ENCODE measurements at regions of chr6 and their contacts with region 1.

Region 1: DNA sequence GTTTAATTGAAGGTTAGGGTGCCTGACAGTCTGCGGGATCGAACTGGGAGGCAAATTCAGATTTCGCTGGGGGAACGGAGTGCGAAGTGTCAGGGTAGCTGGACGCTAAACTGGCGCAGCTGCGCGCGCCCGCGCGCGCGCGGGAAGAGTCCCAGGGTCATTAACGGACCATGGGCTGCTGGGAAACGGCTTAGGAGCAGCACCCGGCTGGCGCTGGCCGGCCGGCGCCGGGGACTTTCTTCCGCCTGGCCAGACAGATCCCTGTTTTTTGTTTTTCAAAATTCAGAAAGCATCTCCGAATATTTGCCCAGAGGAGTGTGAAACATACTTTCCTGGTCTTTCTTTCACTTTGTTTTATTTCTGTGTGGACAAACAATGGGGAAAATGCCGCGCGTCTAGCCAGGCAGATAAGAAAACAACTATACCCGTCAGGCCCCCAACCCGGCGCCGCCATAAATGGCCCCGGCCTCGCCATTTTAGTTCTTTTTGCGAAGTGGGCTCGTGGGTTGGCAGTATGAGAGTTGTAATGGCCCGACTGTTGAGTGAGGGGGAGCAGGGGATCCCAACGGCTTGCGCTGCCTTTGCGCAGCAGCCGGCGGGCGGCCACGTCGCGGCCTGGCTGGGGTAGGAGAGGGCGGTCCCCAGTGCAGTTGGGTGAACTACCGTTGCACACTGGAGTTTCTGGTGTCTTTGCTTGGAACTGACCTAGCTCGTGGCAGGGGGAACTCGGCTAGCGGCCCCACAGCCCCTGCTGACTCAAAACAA is 7.1 kb downstream of the HSPA1B start:
- DNase-seq: peak; percentile 71
- H3K4me3 Mint-ChIP-seq: peak overlapping the region; percentile 87
- H3K27ac Mint-ChIP-seq: peak overlapping the region; percentile 97
- H3K4me1 Mint-ChIP-seq: peaks cover 36% of the 10 kb centered on the region
- H3K27me3 Mint-ChIP-seq: no peaks in the 10 kb centered on the region

Region 2: DNA sequence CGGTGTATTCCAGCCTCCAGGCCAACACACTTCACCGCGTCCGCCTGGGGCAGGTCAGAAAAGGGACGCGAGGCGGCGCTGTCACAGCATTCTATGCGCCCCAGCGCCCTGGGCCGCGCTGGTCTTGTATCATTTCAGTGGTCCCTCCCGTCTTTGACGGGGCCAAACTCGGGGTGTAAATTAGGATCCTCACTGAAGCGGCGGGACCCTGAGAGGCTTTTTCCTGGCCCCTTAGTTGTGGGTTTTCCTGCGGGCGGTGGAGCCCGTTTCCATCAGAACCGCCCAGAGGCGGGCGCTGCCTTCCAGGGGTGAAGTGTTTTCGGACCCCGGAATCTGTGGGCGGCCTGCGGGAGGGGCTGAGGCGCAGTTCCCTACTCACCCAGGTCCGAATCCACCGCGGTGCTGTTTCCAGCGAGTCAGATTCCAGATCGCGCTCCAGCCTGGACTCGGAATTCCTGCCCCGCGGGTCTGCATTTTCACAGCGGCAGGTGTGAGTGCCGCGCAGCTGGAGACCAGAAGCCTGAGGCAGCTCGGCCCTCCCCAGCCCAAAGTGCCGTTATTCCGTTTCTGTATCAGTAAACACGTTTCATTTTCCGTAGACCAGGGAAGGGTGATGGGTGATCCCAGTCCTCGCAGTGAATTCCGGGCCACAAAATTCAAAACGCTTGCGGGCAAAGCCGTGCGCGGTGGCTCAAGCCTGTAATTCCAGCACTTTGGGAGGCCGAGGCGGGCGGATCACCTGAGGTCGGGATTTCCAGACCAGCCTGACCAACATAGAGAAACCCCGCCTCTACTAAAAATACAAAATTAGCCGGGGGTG is 340.5 kb before region 1 on chr6:
- intact Hi-C with region 1: loop called (anchors 10 kb)
- DNase-seq: peak; percentile 69
- H3K4me3 Mint-ChIP-seq: peak overlapping the region; percentile 95
- H3K27ac Mint-ChIP-seq: peak overlapping the region; percentile 87
- H3K4me1 Mint-ChIP-seq: peaks cover 36% of the 10 kb centered on the region
- H3K27me3 Mint-ChIP-seq: no peaks in the 10 kb centered on the region

Region 3: GRCh38 chr6:31665501-31666336 is 168.9 kb before region 1 on chr6 and contains the start of gene CSNK2B:
- intact Hi-C with region 1: loop called (anchors 1 kb)
- DNase-seq: peak; percentile 98
- H3K4me3 Mint-ChIP-seq: peak within 1 kb of the TSS; percentile 96
- H3K27ac Mint-ChIP-seq: peak within 1 kb of the TSS; percentile 94
- H3K4me1 Mint-ChIP-seq: peaks cover 43% of the 10 kb centered on the region
- H3K27me3 Mint-ChIP-seq: no peaks in the 10 kb centered on the region
- total RNA-seq, gene CSNK2B: 266 and 279 TPM in 2 replicates

Region 4: GRCh38 chr6:31769684-31770371 is 64.8 kb before region 1 on chr6:
- intact Hi-C with region 1: loop called (anchors 5 kb)
- DNase-seq: peak; percentile 77
- H3K4me3 Mint-ChIP-seq: no peak overlapping the region
- H3K27ac Mint-ChIP-seq: no peak overlapping the region
- H3K4me1 Mint-ChIP-seq: peaks cover 15% of the 10 kb centered on the region
- H3K27me3 Mint-ChIP-seq: no peaks in the 10 kb centered on the region

Region 5: GRCh38 chr6:31862344-31863227 is 28.0 kb after region 1 on chr6 and contains the start of gene NEU1:
- intact Hi-C with region 1: loop called (anchors 1 kb)
- DNase-seq: peak; percentile 100
- H3K4me3 Mint-ChIP-seq: peak within 1 kb of the TSS; percentile 97
- H3K27ac Mint-ChIP-seq: peak within 1 kb of the TSS; percentile 93
- H3K4me1 Mint-ChIP-seq: peaks cover 13% of the 10 kb centered on the region
- H3K27me3 Mint-ChIP-seq: no peaks in the 10 kb centered on the region
- total RNA-seq, gene NEU1: 21.3 and 21.6 TPM in 2 replicates

Region 6: GRCh38 chr6:32113386-32114352 is 279.1 kb after region 1 on chr6:
- intact Hi-C with region 1: no loop called
- DNase-seq: no peak
- H3K4me3 Mint-ChIP-seq: no peak overlapping the region
- H3K27ac Mint-ChIP-seq: no peak overlapping the region
- H3K4me1 Mint-ChIP-seq: peaks cover 1% of the 10 kb centered on the region
- H3K27me3 Mint-ChIP-seq: peaks cover 8% of the 10 kb centered on the region

Region 7: GRCh38 chr6:32177788-32178546 is 343.4 kb after region 1 on chr6 and contains the start of gene RNF5:
- intact Hi-C with region 1: loop called (anchors 10 kb)
- DNase-seq: peak; percentile 93
- H3K4me3 Mint-ChIP-seq: peak within 1 kb of the TSS; percentile 96
- H3K27ac Mint-ChIP-seq: peak within 1 kb of the TSS; percentile 97
- H3K4me1 Mint-ChIP-seq: peaks cover 50% of the 10 kb centered on the region
- H3K27me3 Mint-ChIP-seq: no peaks in the 10 kb centered on the region
- total RNA-seq, gene RNF5: 61.9 and 63.8 TPM in 2 replicates

Measured in activated T-helper 2 cell treated with anti-CD3 and anti-CD28 coated beads, Interferon-gamma antibody, Interleukin-2, Interleukin-4, amounts not matched to agents 10 μg/mL and 5 μg/mL and 100 μg/mL, durations not matched to agents 14 hours and 24 hours and 36 hours (primary cell).